ENCODE measurements at regions of chr16 and their contacts with region 1.

Region 1: DNA sequence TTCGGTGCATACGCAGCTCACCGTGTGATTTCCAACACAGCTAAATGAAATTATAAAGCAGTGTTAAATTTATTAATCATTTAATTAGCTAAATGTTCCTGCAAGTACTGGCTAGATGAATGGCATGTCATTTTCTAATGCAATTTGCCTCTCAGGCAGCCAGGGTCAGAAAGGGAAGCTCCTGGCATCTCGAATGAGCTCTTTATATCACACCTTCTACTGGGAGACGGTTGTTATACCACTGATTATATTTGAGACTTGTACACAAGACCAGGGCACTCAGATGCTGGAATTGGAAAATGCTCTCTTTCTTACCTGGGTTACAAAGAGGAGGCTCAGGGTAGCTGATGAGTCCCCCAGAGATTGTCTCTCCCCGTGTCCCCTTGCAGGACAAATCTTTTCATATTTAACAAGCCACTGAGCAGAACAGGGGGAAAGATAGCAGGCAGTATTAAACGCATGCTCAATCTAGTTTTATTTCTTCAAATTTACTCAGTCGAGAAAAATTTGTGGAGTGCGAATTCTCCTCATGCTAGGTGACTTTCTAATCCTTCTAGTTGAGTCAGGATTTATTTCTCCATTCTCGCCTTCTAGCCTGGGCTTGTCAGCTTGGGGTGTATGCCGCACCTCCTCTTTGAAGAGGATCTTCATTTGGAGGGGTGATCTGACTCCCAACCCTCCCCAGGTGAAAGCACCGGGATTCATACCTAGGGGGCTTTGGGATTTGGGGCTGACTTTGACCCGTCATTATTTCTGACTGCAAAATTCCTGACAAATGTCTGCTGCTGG is 441.1 kb downstream of the MAF start:
- DNase-seq: no peak
- H3K4me3 ChIP-seq: no peak overlapping the region
- H3K27ac ChIP-seq: no peak overlapping the region
- H3K4me1 ChIP-seq: peaks cover 0 to 26% (median 19%) of the 10 kb centered on the region in 4 experiments
- H3K27me3 ChIP-seq: no peaks in the 10 kb centered on the region

Region 2: DNA sequence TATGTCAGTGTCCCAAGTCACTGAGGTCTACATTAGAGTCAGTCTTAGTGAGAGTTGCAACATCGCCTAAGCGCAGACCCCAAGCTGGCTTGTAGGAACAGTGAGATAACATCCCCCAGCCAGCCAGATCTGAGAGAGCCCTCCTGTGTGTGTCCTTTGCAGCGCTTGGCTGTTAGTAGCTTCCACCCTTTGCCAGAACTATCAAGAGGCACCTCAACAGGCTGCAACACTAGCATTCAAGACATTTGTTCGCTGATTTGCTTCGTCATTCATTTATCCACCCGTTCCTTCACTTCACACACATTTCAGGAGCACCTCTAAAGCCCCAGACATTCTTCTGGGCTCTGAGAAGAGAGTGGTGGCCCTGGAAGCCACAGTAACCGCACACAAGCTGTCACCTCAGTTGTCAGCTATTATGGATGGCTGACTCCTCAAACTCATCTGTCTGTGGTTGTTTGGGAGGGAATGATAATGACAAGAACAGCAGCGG is 770.4 kb before region 1 on chr16:
- CTCF ChIA-PET with region 1: no interaction called
- POLR2A ChIA-PET with region 1: interaction called, 10 read pairs
- DNase-seq: peak in 2 of 3 donors; percentile 3 to 39
- H3K4me3 ChIP-seq: no peak overlapping the region
- H3K27ac ChIP-seq: no peak overlapping the region
- H3K4me1 ChIP-seq: no peaks in the 10 kb centered on the region
- H3K27me3 ChIP-seq: no peaks in the 10 kb centered on the region

Region 3: GRCh38 chr16:79247386-79247785 is 87.9 kb after region 1 on chr16:
- CTCF ChIA-PET with region 1: no interaction called
- POLR2A ChIA-PET with region 1: no interaction called
- DNase-seq: no peak
- H3K4me3 ChIP-seq: no peak overlapping the region
- H3K27ac ChIP-seq: no peak overlapping the region
- H3K4me1 ChIP-seq: no peaks in the 10 kb centered on the region
- H3K27me3 ChIP-seq: no peaks in the 10 kb centered on the region

Region 4: GRCh38 chr16:79347277-79347676 is 187.8 kb after region 1 on chr16:
- CTCF ChIA-PET with region 1: no interaction called
- POLR2A ChIA-PET with region 1: no interaction called
- DNase-seq: no peak
- H3K4me3 ChIP-seq: no peak overlapping the region
- H3K27ac ChIP-seq: no peak overlapping the region
- H3K4me1 ChIP-seq: no peaks in the 10 kb centered on the region
- H3K27me3 ChIP-seq: no peaks in the 10 kb centered on the region

Measured in common myeloid progenitor, CD34-positive (primary cell).